Activated T-helper 1 cell treated with anti-CD3 and anti-CD28 coated beads, Interleukin-12 subunit alpha, Interleukin-12 subunit beta, Interleukin-2, Interleukin-4 antibody, amounts not matched to agents 30 ng/mL and 10 ng/mL and 1 ng/mL, durations not matched to agents 14 hours and 24 hours and 36 hours (primary cell): ENCODE measurements at regions of chr11 and their contacts with region 1.

Region 1: DNA sequence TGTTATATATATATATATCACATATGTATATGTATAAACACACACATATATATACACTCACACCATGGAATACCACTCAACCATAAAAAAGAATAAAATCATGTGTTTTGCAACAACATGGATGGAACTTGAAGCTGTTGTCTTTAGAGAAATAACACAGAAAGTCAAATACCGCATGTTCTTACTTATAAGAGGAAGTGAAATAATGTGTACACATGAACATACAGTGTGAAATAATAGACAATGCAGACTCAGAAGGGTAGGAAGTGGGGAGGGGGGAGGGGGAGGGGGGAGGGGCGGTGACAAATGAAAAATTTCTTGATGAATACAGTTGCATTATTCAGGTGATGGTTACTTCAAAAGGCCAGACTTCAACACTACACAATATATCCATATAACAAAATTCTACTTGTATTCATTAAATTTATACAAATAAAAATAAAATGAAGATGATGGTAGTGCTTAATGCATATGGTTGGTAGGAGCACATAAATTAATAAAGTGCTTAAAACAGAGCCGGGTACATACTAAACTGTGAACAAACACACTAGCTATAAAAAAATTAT is 5.8 kb upstream of the OR5B2 start:
- DNase-seq: no peak
- H3K4me3 Mint-ChIP-seq: no peak overlapping the region
- H3K27ac Mint-ChIP-seq: no peak overlapping the region
- H3K4me1 Mint-ChIP-seq: no peaks in the 10 kb centered on the region
- H3K27me3 Mint-ChIP-seq: peaks cover 2% of the 10 kb centered on the region

Region 2: DNA sequence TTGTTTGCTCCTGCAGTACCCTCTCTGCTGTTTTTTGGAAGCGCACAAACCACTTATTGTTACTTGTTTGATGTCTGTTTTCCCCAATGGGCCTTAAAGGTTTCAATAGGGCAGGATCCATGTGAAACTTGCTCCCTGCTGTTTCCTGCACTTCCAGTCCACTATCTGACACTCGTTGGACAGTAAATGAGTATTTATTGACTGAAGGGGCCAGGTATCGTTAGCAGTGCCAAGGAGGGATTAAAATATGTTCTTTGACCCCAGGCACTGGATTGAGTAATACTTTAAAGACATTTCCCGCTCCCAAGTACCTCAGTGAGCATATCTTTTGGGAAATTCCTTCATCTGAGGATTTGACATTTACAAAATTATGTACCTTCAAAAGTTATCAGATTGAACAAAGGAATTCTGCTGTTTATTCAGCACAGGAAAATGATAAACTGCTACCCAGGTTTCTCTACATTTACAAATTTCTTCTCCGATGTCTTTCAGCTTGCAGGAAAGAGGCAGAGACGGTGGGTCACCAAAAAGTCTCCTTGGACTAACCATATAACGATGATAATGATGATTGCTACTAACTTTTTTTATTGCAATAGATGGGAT is 268.1 kb before region 1 on chr11:
- intact Hi-C with region 1: no loop called
- DNase-seq: no peak
- H3K4me3 Mint-ChIP-seq: no peak overlapping the region
- H3K27ac Mint-ChIP-seq: no peak overlapping the region
- H3K4me1 Mint-ChIP-seq: no peaks in the 10 kb centered on the region
- H3K27me3 Mint-ChIP-seq: no peaks in the 10 kb centered on the region

Region 3: GRCh38 chr11:58495906-58496305 is 62.2 kb after region 1 on chr11:
- intact Hi-C with region 1: loop called (anchors 10 kb)
- DNase-seq: no peak
- H3K4me3 Mint-ChIP-seq: no peak overlapping the region
- H3K27ac Mint-ChIP-seq: no peak overlapping the region
- H3K4me1 Mint-ChIP-seq: peaks cover 7% of the 10 kb centered on the region
- H3K27me3 Mint-ChIP-seq: no peaks in the 10 kb centered on the region